Head of caudate nucleus (tissue), 42 donors: ENCODE measurements at regions of chr11 and their contacts with region 1.

Region 1: DNA sequence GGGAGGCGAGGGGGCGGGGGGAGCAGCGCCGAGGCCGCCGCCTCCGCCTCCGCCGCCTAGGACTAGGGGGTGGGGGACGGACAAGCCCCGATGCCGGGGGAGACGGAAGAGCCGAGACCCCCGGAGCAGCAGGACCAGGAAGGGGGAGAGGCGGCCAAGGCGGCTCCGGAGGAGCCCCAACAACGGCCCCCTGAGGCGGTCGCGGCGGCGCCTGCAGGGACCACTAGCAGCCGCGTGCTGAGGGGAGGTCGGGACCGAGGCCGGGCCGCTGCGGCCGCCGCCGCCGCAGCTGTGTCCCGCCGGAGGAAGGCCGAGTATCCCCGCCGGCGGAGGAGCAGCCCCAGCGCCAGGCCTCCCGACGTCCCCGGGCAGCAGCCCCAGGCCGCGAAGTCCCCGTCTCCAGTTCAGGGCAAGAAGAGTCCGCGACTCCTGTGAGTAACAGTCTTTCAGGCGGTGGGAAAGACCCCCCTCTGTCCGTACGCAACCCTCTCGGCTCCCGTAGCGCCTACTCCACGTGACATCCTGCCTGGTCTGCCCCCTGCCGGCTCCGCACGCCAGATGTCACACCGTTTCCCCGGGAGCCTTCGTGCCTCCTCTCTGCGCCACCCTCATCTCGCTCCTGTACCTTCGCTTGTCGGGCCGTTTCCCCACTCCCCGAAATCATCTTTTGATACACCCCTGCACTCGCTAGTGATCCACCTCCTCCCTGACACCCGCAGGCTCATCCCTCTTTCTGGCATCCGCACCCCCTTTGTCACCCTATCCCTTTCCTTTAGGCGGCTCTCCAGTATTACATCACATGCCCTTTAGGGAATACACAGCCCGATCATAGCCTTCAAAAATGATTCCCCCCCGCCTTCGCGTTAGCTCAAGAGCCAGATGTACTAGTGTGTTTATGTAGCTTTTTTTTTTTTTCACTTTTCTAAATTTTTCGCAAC is 598 bp downstream of the ZFP91 start:
- DNase-seq: peak; percentile 85 to 98 (median 95)

Region 2: DNA sequence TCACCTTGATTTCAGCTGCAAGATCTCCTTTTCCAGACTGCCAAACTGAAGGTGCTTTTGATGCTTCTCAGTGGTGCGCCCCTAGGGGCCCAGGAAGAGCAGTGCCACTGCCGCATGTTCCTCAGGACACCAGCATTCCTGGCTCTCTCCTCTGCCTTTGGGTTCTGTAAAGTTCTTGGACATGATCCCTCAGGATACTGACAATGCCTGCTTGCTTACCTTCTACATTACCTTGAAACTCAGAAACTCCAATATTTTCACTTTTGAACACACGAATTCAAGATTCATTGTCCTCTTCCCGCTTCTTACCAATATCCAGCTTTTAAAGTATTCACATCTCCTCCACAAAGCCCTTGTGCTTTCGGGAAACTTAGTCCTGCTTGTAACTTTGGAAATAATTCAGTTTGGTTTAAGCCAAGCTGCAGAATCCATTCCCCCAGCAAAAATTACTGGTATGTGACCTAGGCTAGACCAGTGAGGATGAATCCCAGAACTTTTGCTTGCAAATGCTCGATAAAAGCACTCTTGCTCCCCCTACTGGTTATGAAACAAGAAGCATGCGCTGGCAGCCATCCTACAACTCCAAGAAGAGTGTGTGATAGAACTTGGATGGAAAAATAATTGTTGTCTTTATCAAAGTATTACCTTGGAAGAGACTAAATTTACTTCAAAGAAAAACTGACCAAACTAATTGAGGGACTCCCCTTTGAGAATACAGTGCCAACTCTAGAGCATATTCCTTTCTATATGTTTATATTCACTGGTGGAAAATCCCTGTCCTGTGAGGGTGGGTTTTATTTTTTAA is 55.0 kb before region 1 on chr11:
- intact Hi-C with region 1: no loop called
- DNase-seq: peak; percentile 13 to 84 (median 65)

Region 3: GRCh38 chr11:58629857-58630256 is 50.4 kb after region 1 on chr11:
- intact Hi-C with region 1: loop called (anchors 10 kb)
- DNase-seq: peak in 17 of 42 donors; percentile 20 to 71 (median 34)